ENCODE measurements at regions of chrX and their contacts with region 1.

Region 1: GRCh38 chrX:65871661-65872311 is 168.1 kb downstream of the VSIG4 start:
- DNase-seq: peak; percentile 84
- H3K4me3 ChIP-seq: no peak overlapping the region
- H3K27ac ChIP-seq: peak overlapping the region; percentile 64
- H3K4me1 ChIP-seq: peaks cover 6% of the 10 kb centered on the region
- H3K27me3 ChIP-seq: no peaks in the 10 kb centered on the region
- CTCF ChIP-seq: peak; percentile 27 to 62

Region 2: GRCh38 chrX:65745992-65746391 is 125.8 kb before region 1 on chrX:
- CTCF ChIA-PET with region 1: no interaction called
- dilution Hi-C with region 1: no loop called
- in situ Hi-C with region 1: no loop called
- intact Hi-C with region 1: loop called (anchors 1 kb)
- DNase-seq: no peak
- H3K4me3 ChIP-seq: no peak overlapping the region
- H3K27ac ChIP-seq: no peak overlapping the region
- H3K4me1 ChIP-seq: peaks cover 11% of the 10 kb centered on the region
- H3K27me3 ChIP-seq: no peaks in the 10 kb centered on the region
- CTCF ChIP-seq: peak; percentile 25 to 37

Region 3: GRCh38 chrX:65886813-65887212 is 15.0 kb after region 1 on chrX:
- CTCF ChIA-PET with region 1: no interaction called
- dilution Hi-C with region 1: no loop called
- in situ Hi-C with region 1: no loop called
- intact Hi-C with region 1: no loop called
- DNase-seq: no peak
- H3K4me3 ChIP-seq: no peak overlapping the region
- H3K27ac ChIP-seq: no peak overlapping the region
- H3K4me1 ChIP-seq: no peaks in the 10 kb centered on the region
- H3K27me3 ChIP-seq: no peaks in the 10 kb centered on the region
- CTCF ChIP-seq: no peak

Region 4: GRCh38 chrX:65920659-65921066 is 48.9 kb after region 1 on chrX:
- CTCF ChIA-PET with region 1: no interaction called
- dilution Hi-C with region 1: no loop called
- in situ Hi-C with region 1: no loop called
- intact Hi-C with region 1: loop called (anchors 5 kb)
- DNase-seq: peak; percentile 85
- H3K4me3 ChIP-seq: no peak overlapping the region
- H3K27ac ChIP-seq: peak overlapping the region; percentile 88
- H3K4me1 ChIP-seq: peaks cover 15% of the 10 kb centered on the region
- H3K27me3 ChIP-seq: no peaks in the 10 kb centered on the region
- CTCF ChIP-seq: no peak

Region 5: GRCh38 chrX:66042307-66043077 is 170.7 kb after region 1 on chrX:
- CTCF ChIA-PET with region 1: no interaction called
- dilution Hi-C with region 1: no loop called
- in situ Hi-C with region 1: no loop called
- intact Hi-C with region 1: no loop called
- DNase-seq: no peak
- H3K4me3 ChIP-seq: no peak overlapping the region
- H3K27ac ChIP-seq: no peak overlapping the region
- H3K4me1 ChIP-seq: no peaks in the 10 kb centered on the region
- H3K27me3 ChIP-seq: no peaks in the 10 kb centered on the region
- CTCF ChIP-seq: no peak

Region 6: DNA sequence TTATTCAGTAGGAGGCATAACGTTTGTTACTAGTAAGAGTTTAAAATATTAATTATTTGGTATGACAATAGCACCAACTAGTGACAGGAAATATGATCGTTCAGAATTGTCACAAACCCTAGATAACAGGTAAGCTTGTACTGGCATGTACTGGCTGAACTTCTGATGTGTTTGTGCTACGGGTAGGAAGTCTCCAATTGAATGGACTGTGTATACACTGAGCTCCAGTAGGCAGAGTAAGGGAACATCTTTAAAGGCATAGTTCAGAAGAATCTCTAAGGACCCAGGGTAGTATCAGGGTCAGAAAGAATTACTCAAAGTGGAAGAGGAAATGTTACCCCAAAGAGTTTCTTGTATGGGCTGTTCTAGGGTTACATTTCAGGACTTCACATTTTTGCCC is 536.7 kb after region 1 on chrX:
- CTCF ChIA-PET with region 1: no interaction called
- dilution Hi-C with region 1: no loop called
- in situ Hi-C with region 1: no loop called
- intact Hi-C with region 1: loop called (anchors 5 kb)
- DNase-seq: peak; percentile 12
- H3K4me3 ChIP-seq: no peak overlapping the region
- H3K27ac ChIP-seq: no peak overlapping the region
- H3K4me1 ChIP-seq: no peaks in the 10 kb centered on the region
- H3K27me3 ChIP-seq: no peaks in the 10 kb centered on the region
- CTCF ChIP-seq: peak in 1 of 2 donors; percentile 29

Region 7: GRCh38 chrX:67104982-67105757 is 1233.4 kb after region 1 on chrX:
- CTCF ChIA-PET with region 1: no interaction called
- dilution Hi-C with region 1: no loop called
- in situ Hi-C with region 1: no loop called
- intact Hi-C with region 1: no loop called
- DNase-seq: no peak
- H3K4me3 ChIP-seq: no peak overlapping the region
- H3K27ac ChIP-seq: no peak overlapping the region
- H3K4me1 ChIP-seq: no peaks in the 10 kb centered on the region
- H3K27me3 ChIP-seq: no peaks in the 10 kb centered on the region
- CTCF ChIP-seq: no peak